Right lobe of liver (tissue), 6 donors: ENCODE measurements at regions of chr11 and their contacts with region 1.

Region 1: DNA sequence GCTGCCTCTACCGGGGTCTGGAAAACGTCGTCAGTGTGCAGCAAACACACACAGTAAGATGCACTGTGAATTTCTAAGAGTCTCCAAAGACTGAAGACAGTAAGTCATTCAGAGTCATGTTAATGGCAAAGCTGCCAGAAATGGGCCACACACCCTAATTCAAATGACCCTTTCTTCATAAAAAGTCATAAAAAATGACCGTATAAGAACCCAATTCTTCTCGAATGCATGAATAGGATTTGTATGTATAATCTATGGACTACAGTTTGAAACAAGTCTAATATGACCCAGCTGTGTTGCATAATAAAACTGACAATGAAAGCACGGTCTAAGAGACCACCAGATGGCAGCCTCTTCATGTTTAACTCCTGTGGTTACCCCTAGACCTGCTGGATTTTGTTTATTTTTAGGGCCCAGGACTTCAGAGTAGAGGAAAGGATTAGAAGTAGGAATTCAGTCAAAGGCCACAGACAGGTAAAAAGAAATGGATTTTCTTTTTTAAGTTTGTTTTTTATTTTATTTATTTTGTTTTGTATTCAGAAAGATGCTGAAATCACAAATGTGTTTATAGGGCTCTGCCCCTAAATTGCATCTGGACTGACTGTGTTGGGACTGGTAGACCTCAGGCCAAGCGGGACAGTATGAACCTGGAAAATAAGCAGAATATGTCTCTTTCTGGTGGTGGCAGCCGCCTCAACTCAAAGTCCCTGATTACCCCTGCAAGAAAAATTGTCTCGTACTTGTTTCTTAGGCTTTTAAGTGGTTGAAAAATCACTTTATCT is 32.1 kb upstream of the SLC5A12 start:
- DNase-seq: peak in 2 of 3 donors; percentile 18 to 50
- ATAC-seq: peak; percentile 91 to 94 (median 93)
- H3K4me3 ChIP-seq: no peak overlapping the region
- H3K27ac ChIP-seq: no peak overlapping the region
- H3K4me1 ChIP-seq: no peaks in the 10 kb centered on the region
- H3K27me3 ChIP-seq: no peaks in the 10 kb centered on the region
- CTCF ChIP-seq: peak; percentile 74 to 89 (median 80)
- POLR2A ChIP-seq: no peak

Region 2: DNA sequence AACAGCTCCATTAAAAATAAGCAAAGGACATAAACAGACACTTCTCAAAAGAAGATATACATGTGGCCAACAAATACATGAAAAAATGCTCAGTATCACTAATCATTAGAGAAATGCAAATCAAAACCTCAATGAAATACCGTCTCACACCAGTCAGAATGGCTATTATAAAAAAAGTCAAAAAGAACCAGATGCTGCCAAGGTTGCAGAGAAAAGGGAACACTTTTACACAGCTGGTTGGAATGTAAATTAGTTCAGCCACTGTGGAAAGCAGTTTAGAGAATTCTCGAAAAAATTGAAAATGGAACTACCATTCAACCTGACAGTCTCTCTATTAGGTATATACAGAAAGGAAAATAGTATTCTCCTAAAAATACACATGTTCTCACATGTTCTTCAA is 137.6 kb after region 1 on chr11:
- intact Hi-C with region 1: no loop called
- DNase-seq: no peak
- ATAC-seq: no peak
- H3K4me3 ChIP-seq: no peak overlapping the region
- H3K27ac ChIP-seq: no peak overlapping the region
- H3K4me1 ChIP-seq: no peaks in the 10 kb centered on the region
- H3K27me3 ChIP-seq: no peaks in the 10 kb centered on the region
- CTCF ChIP-seq: no peak
- POLR2A ChIP-seq: no peak

Region 3: DNA sequence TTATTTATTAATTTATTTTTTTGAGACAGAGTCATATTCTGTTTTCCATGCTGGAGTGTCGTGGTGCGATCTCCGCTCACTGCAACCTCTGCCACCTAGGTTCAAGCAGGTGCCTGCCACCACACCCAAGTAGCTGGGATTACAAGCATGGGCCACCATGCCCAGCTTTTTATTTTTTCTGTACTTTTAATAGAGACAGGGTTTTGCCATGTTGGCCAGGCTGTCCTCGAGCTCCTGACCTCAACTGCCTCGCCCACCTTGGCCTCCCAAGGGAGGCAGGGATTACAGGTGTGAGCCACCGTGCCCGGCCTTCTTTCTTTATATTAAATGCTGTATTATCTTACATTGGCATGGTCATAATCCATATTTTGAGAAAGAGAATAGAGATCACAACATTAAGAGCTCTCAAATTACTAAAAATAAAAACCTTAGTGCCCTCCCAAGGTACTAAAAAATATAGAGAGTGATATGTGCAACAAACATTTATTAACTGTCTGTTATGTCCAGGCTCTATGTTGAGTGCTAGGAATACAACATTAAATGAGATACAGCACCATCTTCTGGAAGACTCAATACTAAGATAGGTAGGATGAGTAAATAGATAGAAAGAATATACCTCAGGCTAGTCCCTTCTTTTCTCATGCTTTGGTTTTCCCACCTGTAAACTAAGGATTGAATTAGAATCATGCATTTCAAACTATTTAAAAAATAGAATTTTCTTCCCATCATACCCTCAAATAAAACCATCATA is 370.8 kb after region 1 on chr11:
- intact Hi-C with region 1: loop called in 1 of 2 experiments (anchors 10 kb)
- DNase-seq: no peak
- ATAC-seq: peak; percentile 87 to 92 (median 89)
- H3K4me3 ChIP-seq: no peak overlapping the region
- H3K27ac ChIP-seq: no peak overlapping the region
- H3K4me1 ChIP-seq: no peaks in the 10 kb centered on the region
- H3K27me3 ChIP-seq: no peaks in the 10 kb centered on the region
- CTCF ChIP-seq: peak; percentile 36 to 58 (median 51)
- POLR2A ChIP-seq: no peak

Region 4: GRCh38 chr11:27161071-27161470 is 407.2 kb after region 1 on chr11:
- intact Hi-C with region 1: loop called in 1 of 2 experiments (anchors 10 kb)
- DNase-seq: no peak
- ATAC-seq: no peak
- H3K4me3 ChIP-seq: no peak overlapping the region
- H3K27ac ChIP-seq: no peak overlapping the region
- H3K4me1 ChIP-seq: no peaks in the 10 kb centered on the region
- H3K27me3 ChIP-seq: no peaks in the 10 kb centered on the region
- CTCF ChIP-seq: no peak
- POLR2A ChIP-seq: no peak